Activated CD4-positive, alpha-beta memory T cell treated with anti-CD3 and anti-CD28 coated beads for 36 hours (primary cell): ENCODE measurements at regions of chr9 and their contacts with region 1.

Region 1: GRCh38 chr9:37079370-37080164 is 40.8 kb upstream of the ZCCHC7 start:
- DNase-seq: peak; percentile 96
- H3K4me3 Mint-ChIP-seq: peak overlapping the region; percentile 98
- H3K27ac Mint-ChIP-seq: peak overlapping the region; percentile 93
- H3K4me1 Mint-ChIP-seq: peaks cover 46% of the 10 kb centered on the region
- H3K27me3 Mint-ChIP-seq: peaks cover 8% of the 10 kb centered on the region

Region 2: DNA sequence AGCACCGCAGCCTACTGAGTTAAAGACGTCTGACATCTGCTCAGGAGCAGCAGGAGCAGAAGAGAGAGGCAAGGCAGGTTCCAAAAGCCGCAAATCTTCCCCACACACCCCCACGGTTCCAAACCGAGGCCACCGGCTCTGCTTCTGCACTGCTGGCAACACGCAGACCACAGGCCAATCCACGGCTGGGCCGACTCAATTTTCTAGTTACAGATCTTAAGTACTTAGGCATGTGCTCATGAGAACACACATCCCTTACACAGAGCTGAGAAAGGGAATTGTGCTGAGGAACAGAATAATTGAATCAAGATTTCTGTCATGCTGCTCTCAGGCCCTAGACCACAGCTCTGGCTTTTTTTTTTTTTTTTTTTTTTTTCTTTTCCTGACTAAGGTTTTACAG is 78.1 kb before region 1 on chr9:
- CTCF ChIA-PET with region 1: no interaction called
- POLR2A ChIA-PET with region 1: no interaction called
- intact Hi-C with region 1: no loop called
- DNase-seq: no peak
- H3K4me3 Mint-ChIP-seq: no peak overlapping the region
- H3K27ac Mint-ChIP-seq: no peak overlapping the region
- H3K4me1 Mint-ChIP-seq: peaks cover 2% of the 10 kb centered on the region
- H3K27me3 Mint-ChIP-seq: peaks cover 36% of the 10 kb centered on the region

Region 3: GRCh38 chr9:37036776-37037502 is 42.6 kb before region 1 on chr9:
- CTCF ChIA-PET with region 1: no interaction called
- POLR2A ChIA-PET with region 1: interaction called, 5 read pairs
- intact Hi-C with region 1: loop called (anchors 2 kb)
- DNase-seq: peak; percentile 56
- H3K4me3 Mint-ChIP-seq: peak overlapping the region; percentile 72
- H3K27ac Mint-ChIP-seq: no peak overlapping the region
- H3K4me1 Mint-ChIP-seq: peaks cover 30% of the 10 kb centered on the region
- H3K27me3 Mint-ChIP-seq: peaks cover 81% of the 10 kb centered on the region

Region 4: GRCh38 chr9:37100327-37100726 is 20.8 kb after region 1 on chr9:
- CTCF ChIA-PET with region 1: no interaction called
- POLR2A ChIA-PET with region 1: no interaction called
- intact Hi-C with region 1: no loop called
- DNase-seq: no peak
- H3K4me3 Mint-ChIP-seq: no peak overlapping the region
- H3K27ac Mint-ChIP-seq: no peak overlapping the region
- H3K4me1 Mint-ChIP-seq: peaks cover 5% of the 10 kb centered on the region
- H3K27me3 Mint-ChIP-seq: no peaks in the 10 kb centered on the region